ENCODE measurements at regions of chr7 and their contacts with region 1.

Region 1: DNA sequence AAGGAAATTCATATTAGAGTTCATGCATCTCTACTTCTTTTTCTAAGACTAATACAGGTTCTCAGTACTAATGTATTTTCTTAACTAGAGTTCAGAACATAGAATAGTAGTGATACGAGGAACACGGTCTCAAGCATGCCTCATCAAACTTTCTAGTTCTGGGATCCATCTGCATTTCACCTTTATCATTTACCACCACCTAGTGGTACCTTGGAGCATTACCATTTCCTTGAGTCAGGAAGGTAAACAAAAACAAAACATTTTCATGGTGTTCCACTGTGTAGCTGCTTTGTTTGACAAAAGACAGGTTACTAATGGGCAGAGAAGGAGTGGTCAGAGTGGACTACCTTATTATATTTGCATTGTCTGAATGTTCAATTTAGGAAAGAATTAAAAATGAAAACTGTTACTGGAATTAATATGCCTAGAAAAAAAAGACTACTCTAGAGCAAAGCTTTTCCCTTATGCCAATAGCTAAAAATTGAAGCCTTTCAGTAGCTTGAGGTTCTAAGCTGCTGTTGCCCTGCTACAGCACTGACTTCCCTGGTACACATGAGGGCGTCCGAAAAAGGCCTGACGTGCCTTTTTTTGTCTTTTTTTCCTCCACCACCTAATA is 44.5 kb downstream of the STARD3NL start:
- DNase-seq: no peak
- H3K4me3 ChIP-seq: no peak overlapping the region
- H3K27ac ChIP-seq: peak overlapping the region in 2 of 4 donors; percentile 10 to 48
- H3K4me1 ChIP-seq: peaks cover 0 to 14% (median 3%) of the 10 kb centered on the region in 4 donors
- H3K27me3 ChIP-seq: no peaks in the 10 kb centered on the region
- CTCF ChIP-seq: peak; percentile 78 to 88 (median 84)
- EP300 ChIP-seq: no peak
- POLR2A ChIP-seq: no peak

Region 2: GRCh38 chr7:37601321-37601720 is 621.3 kb before region 1 on chr7:
- intact Hi-C with region 1: no loop called
- DNase-seq: no peak
- H3K4me3 ChIP-seq: no peak overlapping the region
- H3K27ac ChIP-seq: no peak overlapping the region
- H3K4me1 ChIP-seq: no peaks in the 10 kb centered on the region
- H3K27me3 ChIP-seq: no peaks in the 10 kb centered on the region
- CTCF ChIP-seq: no peak
- EP300 ChIP-seq: no peak
- POLR2A ChIP-seq: no peak

Region 3: GRCh38 chr7:37901236-37901827 is 321.3 kb before region 1 on chr7:
- intact Hi-C with region 1: loop called (anchors 5 kb)
- DNase-seq: no peak
- H3K4me3 ChIP-seq: no peak overlapping the region
- H3K27ac ChIP-seq: peak overlapping the region in 1 of 4 donors; percentile 13
- H3K4me1 ChIP-seq: peaks cover 0 to 22% (median 18%) of the 10 kb centered on the region in 4 donors
- H3K27me3 ChIP-seq: no peaks in the 10 kb centered on the region
- CTCF ChIP-seq: peak in 2 of 4 experiments; percentile 34 to 46
- EP300 ChIP-seq: no peak
- POLR2A ChIP-seq: no peak

Region 4: GRCh38 chr7:38306171-38306570 is 83.6 kb after region 1 on chr7:
- intact Hi-C with region 1: no loop called
- DNase-seq: no peak
- H3K4me3 ChIP-seq: no peak overlapping the region
- H3K27ac ChIP-seq: no peak overlapping the region
- H3K4me1 ChIP-seq: peaks cover 0 to 3% (median 0%) of the 10 kb centered on the region in 4 donors
- H3K27me3 ChIP-seq: no peaks in the 10 kb centered on the region
- CTCF ChIP-seq: no peak
- EP300 ChIP-seq: no peak
- POLR2A ChIP-seq: no peak